ENCODE measurements at regions of chr5 and their contacts with region 1.

Region 1: GRCh38 chr5:177382423-177383029 is 1.7 kb upstream of the SLC34A1 start:
- DNase-seq: peak in 1 of 2 experiments; percentile 64
- H3K4me3 ChIP-seq: no peak overlapping the region
- H3K27ac ChIP-seq: no peak overlapping the region
- H3K4me1 ChIP-seq: peaks cover 0 to 12% (median 2%) of the 10 kb centered on the region in 4 experiments; a peak in 4 of 7 replicates
- H3K27me3 ChIP-seq: peaks cover 0 to 2% (median under 1%) of the 10 kb centered on the region in 4 experiments; a peak in 3 of 7 replicates
- CTCF ChIP-seq: peak in 2 of 3 experiments; percentile 37 to 59; a peak in 3 of 4 replicates
- EP300 ChIP-seq: no peak
- POLR2A ChIP-seq: no peak
- RAD21 ChIP-seq: peak; percentile 22 to 41; a peak in 2 of 4 replicates

Region 2: GRCh38 chr5:177317959-177318377 is 64.6 kb before region 1 on chr5:
- CTCF ChIA-PET with region 1: interaction called, 23 read pairs
- POLR2A ChIA-PET with region 1: no interaction called
- DNase-seq: peak in 1 of 2 experiments; percentile 87
- H3K4me3 ChIP-seq: no peak overlapping the region
- H3K27ac ChIP-seq: no peak overlapping the region
- H3K4me1 ChIP-seq: peaks cover 0 to 4% (median 1%) of the 10 kb centered on the region in 4 experiments; a peak in 4 of 7 replicates
- H3K27me3 ChIP-seq: no peaks in the 10 kb centered on the region
- CTCF ChIP-seq: peak in 2 of 3 experiments; percentile 85 to 89; a peak in 3 of 4 replicates
- EP300 ChIP-seq: no peak
- POLR2A ChIP-seq: no peak
- RAD21 ChIP-seq: peak; percentile 87 to 90

Region 3: GRCh38 chr5:177362610-177363507 is 19.7 kb before region 1 on chr5:
- CTCF ChIA-PET with region 1: interaction called, 363 read pairs
- POLR2A ChIA-PET with region 1: interaction called, 16 read pairs
- DNase-seq: peak in 1 of 2 experiments; percentile 89
- H3K4me3 ChIP-seq: peak overlapping the region; percentile 43 to 69 (median 48)
- H3K27ac ChIP-seq: no peak overlapping the region
- H3K4me1 ChIP-seq: peaks cover 2 to 27% (median 22%) of the 10 kb centered on the region in 4 experiments
- H3K27me3 ChIP-seq: peaks cover 0 to 11% (median 9%) of the 10 kb centered on the region in 4 experiments; a peak in 4 of 7 replicates
- CTCF ChIP-seq: no peak
- EP300 ChIP-seq: no peak
- POLR2A ChIP-seq: 0 out of 3 replicates have a peak, but pooled peaks of 1 of the 2 experiments have one; percentile 16
- RAD21 ChIP-seq: no peak

Region 4: DNA sequence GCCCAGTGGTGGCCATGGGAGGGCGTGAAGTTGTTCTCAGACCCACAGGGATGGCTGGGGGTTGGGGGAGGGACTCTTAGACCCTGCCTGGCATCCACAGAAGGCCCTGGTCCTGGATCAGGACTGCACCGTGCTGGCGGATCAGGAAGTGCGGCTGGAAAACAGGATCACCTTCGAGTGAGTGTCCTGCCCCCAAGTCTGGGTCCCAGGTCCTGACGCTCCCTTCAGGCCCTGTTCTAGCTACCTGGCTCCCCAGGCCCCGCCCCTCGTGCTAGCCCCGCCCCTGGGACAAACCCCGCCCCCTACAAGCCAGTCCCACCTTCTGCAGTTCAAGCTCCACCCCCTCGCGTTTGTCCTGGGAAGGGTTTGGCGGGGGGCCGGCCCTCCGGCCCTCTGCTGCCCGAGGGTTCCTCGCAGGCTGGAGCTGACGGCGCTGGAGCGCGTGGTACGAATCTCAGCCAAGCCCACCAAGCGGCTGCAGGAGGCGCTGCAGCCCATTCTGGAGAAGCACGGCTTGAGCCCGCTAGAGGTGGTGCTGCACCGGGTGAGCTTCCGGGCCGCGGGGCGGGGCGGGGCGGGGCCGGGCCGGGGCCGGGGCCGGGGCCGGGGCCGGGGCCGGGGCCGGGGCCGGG is 11.9 kb before region 1 on chr5:
- CTCF ChIA-PET with region 1: interaction called, 363 read pairs
- POLR2A ChIA-PET with region 1: interaction called, 16 read pairs
- DNase-seq: peak; percentile 93 to 99
- H3K4me3 ChIP-seq: peak overlapping the region; percentile 23 to 63 (median 58); a peak in 6 of 8 replicates
- H3K27ac ChIP-seq: 0 out of 2 replicates have a peak overlapping the region, but pooled peaks have one; percentile 60
- H3K4me1 ChIP-seq: peaks cover 8 to 36% (median 31%) of the 10 kb centered on the region in 4 experiments
- H3K27me3 ChIP-seq: peaks cover 1 to 14% (median 12%) of the 10 kb centered on the region in 4 experiments; a peak in 4 of 7 replicates
- CTCF ChIP-seq: peak in 2 of 3 experiments; percentile 79 to 98; a peak in 3 of 4 replicates
- EP300 ChIP-seq: no peak
- POLR2A ChIP-seq: 0 out of 3 replicates have a peak, but pooled peaks of 1 of the 2 experiments have one; percentile 16
- RAD21 ChIP-seq: peak; percentile 66 to 75